CD4-positive, alpha-beta T cell (primary cell): ENCODE measurements at regions of chr7 and their contacts with region 1.

Region 1: DNA sequence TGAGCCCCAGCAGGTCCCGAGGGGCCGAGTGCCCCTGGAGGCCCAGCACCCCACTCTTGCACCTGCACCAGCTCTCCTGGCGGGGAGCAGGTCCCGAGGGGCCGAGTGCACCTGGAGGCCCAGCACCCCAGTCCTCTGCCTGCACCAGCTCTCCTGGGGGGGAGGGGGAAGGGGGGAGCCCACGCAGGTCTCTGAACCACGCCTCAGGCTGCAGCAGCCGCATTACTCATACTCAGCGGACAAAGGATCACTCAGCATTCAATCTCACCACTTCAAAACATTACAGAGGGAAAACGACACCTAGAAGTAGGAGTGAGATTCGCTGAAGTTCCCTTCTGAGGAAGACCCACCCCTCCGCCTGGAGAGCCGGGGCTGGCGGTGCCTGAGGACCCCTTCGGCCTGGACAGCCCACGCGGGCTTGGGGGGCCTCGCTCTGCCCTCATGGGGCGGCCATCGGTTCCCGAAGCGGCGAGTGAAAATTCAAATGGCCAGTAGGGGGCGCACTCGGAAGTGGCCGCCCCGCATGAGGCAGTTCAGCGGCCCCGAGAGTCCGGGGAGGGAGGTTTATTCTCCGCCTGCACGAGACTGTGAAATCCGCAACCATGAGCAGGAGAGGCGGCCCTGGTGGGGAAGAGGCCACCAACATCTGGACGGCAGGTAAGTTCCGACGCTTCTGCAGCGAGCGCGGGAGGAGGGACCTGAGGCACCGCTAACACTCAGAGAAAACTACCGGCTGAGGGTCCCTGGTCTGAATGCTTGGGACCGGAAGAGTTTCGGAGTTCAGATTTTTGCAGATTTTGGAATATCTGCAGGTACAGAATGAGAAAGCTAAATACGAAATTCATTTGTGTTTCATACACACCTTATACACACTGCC is 1.1 kb upstream of the GPER1 start:
- DNase-seq: peak; percentile 48 to 82 (median 65)
- ATAC-seq: peak; percentile 84
- H3K4me3 ChIP-seq: peak overlapping the region; percentile 28
- H3K4me3 Mint-ChIP-seq: peak overlapping the region; percentile 20
- H3K27ac ChIP-seq: no peak overlapping the region
- H3K27ac Mint-ChIP-seq: no peak overlapping the region
- H3K4me1 ChIP-seq: peaks cover 11% of the 10 kb centered on the region
- H3K4me1 Mint-ChIP-seq: peaks cover 8% of the 10 kb centered on the region
- H3K27me3 ChIP-seq: no peaks in the 10 kb centered on the region
- H3K27me3 Mint-ChIP-seq: no peaks in the 10 kb centered on the region
- CTCF ChIP-seq: peak; percentile 98

Region 2: DNA sequence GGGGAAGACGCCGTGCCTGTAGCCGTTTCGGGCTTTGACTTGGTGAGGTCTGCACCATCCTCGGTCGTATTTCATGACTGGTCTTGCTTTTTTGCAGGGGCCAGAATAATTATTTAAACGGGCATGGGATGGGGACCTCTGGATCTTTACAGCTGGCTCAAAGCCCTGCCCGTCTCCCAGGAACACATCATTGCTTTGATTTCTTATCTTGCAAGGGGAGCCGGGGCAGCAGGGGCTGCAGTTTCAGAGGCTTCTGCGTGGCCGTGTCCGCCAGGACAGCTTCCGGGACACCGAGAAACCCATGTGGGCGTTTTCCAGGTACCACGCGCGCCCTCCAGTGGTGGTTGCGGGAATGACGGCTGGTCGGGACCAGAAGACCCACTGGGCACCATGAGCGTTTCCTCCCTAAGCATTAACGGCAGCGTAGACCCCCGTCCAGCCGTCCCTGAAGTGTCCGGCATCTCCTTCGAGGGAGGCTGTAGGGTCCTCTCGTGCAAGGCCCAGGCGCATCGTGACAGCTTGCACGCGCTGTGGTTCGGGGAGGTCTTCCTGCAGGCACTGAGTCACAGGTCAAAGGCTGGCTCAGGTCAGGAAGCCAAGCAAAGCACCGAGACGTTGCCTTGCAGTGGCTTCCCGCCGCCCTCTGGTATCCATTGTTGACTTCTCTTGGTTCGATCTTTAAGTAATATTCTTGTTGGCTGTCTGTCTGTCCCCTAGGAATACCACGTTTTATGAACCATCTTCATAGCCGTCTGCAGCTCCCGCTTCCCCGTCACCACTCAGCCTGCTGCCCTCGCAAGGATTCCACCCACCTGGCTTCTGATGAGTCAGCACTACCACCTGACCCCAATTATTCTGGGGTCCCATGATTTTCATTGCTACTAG is 89.4 kb after region 1 on chr7:
- CTCF ChIA-PET with region 1: interaction called, 3 read pairs
- POLR2A ChIA-PET with region 1: no interaction called
- intact Hi-C with region 1: loop called (anchors 1 to 2 kb)
- DNase-seq: peak; percentile 55 to 85 (median 72)
- ATAC-seq: peak; percentile 59
- H3K4me3 ChIP-seq: no peak overlapping the region
- H3K4me3 Mint-ChIP-seq: peak overlapping the region; percentile 4
- H3K27ac ChIP-seq: no peak overlapping the region
- H3K27ac Mint-ChIP-seq: no peak overlapping the region
- H3K4me1 ChIP-seq: peaks cover 17% of the 10 kb centered on the region
- H3K4me1 Mint-ChIP-seq: peaks cover 13% of the 10 kb centered on the region
- H3K27me3 ChIP-seq: peaks cover 0 to 4% of the 10 kb centered on the region in 2 experiments
- H3K27me3 Mint-ChIP-seq: peaks cover 26% of the 10 kb centered on the region
- CTCF ChIP-seq: peak; percentile 94